B cell (primary cell): ENCODE measurements at regions of chr18 and their contacts with region 1.

Region 1: GRCh38 chr18:45106331-45106774 is 425.7 kb downstream of the SETBP1 start:
- DNase-seq: peak; percentile 80
- ATAC-seq: peak; percentile 56
- H3K4me3 ChIP-seq: peak overlapping the region in 2 of 5 experiments; percentile 8 to 30
- H3K4me3 Mint-ChIP-seq: peak overlapping the region; percentile 59
- H3K27ac ChIP-seq: peak overlapping the region; percentile 89 to 93
- H3K27ac Mint-ChIP-seq: peak overlapping the region; percentile 83
- H3K4me1 ChIP-seq: peaks cover 67 to 68% of the 10 kb centered on the region in 2 donors
- H3K4me1 Mint-ChIP-seq: peaks cover 53% of the 10 kb centered on the region
- H3K27me3 ChIP-seq: no peaks in the 10 kb centered on the region
- H3K27me3 Mint-ChIP-seq: no peaks in the 10 kb centered on the region
- CTCF ChIP-seq: no peak

Region 2: GRCh38 chr18:44725300-44726096 is 380.9 kb before region 1 on chr18:
- CTCF ChIA-PET with region 1: no interaction called
- POLR2A ChIA-PET with region 1: no interaction called
- intact Hi-C with region 1: loop called (anchors 5 kb)
- DNase-seq: peak; percentile 68
- ATAC-seq: peak; percentile 50
- H3K4me3 ChIP-seq: peak overlapping the region in 3 of 5 experiments; percentile 3 to 23 (median 7)
- H3K4me3 Mint-ChIP-seq: peak overlapping the region; percentile 70
- H3K27ac ChIP-seq: peak overlapping the region; percentile 80 to 85
- H3K27ac Mint-ChIP-seq: peak overlapping the region; percentile 88
- H3K4me1 ChIP-seq: peaks cover 99 to 100% of the 10 kb centered on the region in 2 donors
- H3K4me1 Mint-ChIP-seq: peaks cover 98% of the 10 kb centered on the region
- H3K27me3 ChIP-seq: no peaks in the 10 kb centered on the region
- H3K27me3 Mint-ChIP-seq: no peaks in the 10 kb centered on the region
- CTCF ChIP-seq: no peak

Region 3: GRCh38 chr18:45026162-45026561 is 80.2 kb before region 1 on chr18:
- CTCF ChIA-PET with region 1: no interaction called
- POLR2A ChIA-PET with region 1: no interaction called
- intact Hi-C with region 1: no loop called
- DNase-seq: no peak
- ATAC-seq: peak; percentile 28
- H3K4me3 ChIP-seq: no peak overlapping the region
- H3K4me3 Mint-ChIP-seq: no peak overlapping the region
- H3K27ac ChIP-seq: no peak overlapping the region
- H3K27ac Mint-ChIP-seq: no peak overlapping the region
- H3K4me1 ChIP-seq: peaks cover 14 to 21% of the 10 kb centered on the region in 2 donors
- H3K4me1 Mint-ChIP-seq: peaks cover 32% of the 10 kb centered on the region
- H3K27me3 ChIP-seq: no peaks in the 10 kb centered on the region
- H3K27me3 Mint-ChIP-seq: no peaks in the 10 kb centered on the region
- CTCF ChIP-seq: no peak

Region 4: DNA sequence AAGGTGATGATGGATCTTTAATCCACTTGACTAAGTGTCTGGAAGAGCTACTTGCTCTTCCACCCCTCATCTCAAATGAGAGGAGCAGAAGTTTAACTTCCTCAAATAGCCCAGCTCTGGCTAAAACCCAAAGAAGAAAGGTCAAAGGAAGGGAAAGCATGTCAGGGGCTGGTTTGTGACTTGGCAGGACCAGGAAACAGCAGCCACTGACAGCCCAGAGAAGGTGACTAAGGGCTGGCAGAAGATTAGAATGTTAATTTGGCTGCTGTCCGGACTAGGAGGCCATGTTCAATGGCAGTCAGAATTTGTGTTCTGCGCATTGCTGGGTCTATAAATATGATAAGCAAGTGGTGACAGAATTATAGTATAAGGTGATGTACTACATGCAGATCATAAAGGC is 39.5 kb before region 1 on chr18:
- CTCF ChIA-PET with region 1: interaction called, 3 read pairs
- POLR2A ChIA-PET with region 1: no interaction called
- intact Hi-C with region 1: loop called (anchors 5 kb)
- DNase-seq: peak; percentile 13
- ATAC-seq: peak; percentile 36
- H3K4me3 ChIP-seq: no peak overlapping the region
- H3K4me3 Mint-ChIP-seq: no peak overlapping the region
- H3K27ac ChIP-seq: no peak overlapping the region
- H3K27ac Mint-ChIP-seq: peak overlapping the region; percentile 33
- H3K4me1 ChIP-seq: peaks cover 15 to 16% of the 10 kb centered on the region in 2 donors
- H3K4me1 Mint-ChIP-seq: peaks cover 27% of the 10 kb centered on the region
- H3K27me3 ChIP-seq: no peaks in the 10 kb centered on the region
- H3K27me3 Mint-ChIP-seq: no peaks in the 10 kb centered on the region
- CTCF ChIP-seq: no peak

Region 5: GRCh38 chr18:45136381-45137086 is 30.2 kb after region 1 on chr18:
- CTCF ChIA-PET with region 1: no interaction called
- POLR2A ChIA-PET with region 1: interaction called, 3 read pairs
- intact Hi-C with region 1: loop called (anchors 5 kb)
- DNase-seq: no peak
- ATAC-seq: no peak
- H3K4me3 ChIP-seq: no peak overlapping the region
- H3K4me3 Mint-ChIP-seq: peak overlapping the region; percentile 42
- H3K27ac ChIP-seq: peak overlapping the region; percentile 25 to 67
- H3K27ac Mint-ChIP-seq: peak overlapping the region; percentile 73
- H3K4me1 ChIP-seq: peaks cover 18 to 19% of the 10 kb centered on the region in 2 donors
- H3K4me1 Mint-ChIP-seq: peaks cover 38% of the 10 kb centered on the region
- H3K27me3 ChIP-seq: no peaks in the 10 kb centered on the region
- H3K27me3 Mint-ChIP-seq: no peaks in the 10 kb centered on the region
- CTCF ChIP-seq: no peak